ENCODE measurements at regions of chr7 and their contacts with region 1.

Region 1: DNA sequence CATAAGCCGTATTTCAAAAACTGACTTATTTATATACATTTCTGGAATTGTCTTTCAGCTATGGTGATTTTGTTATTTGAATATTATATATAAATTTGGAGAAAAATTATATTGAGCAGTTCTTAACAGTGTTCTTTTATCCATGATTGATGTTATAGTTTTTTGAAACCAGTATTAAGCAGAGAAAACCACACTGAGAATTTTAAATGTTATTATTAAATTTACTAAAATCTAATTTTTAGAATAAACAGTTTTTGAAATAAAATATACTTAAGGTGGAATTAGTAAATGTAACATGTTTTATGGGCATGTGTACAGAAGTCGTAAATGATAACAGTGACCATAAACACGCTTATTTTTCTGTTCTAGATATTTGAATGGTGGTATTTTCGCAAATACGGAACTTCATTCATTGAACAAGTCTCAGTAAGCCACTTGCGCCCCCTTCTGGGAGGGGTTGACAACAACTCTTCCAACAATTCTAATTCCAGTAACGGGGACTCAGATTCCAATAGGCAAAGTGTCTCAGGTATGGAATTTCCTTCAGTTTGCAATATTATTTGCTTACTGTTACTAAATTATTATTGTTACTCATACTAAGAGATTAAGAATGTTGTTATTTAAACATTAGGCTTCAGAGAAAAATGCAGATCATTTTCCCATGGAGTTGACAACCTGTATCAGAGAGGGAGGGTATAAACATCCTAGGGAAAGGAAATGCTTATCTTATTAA is 166.1 kb downstream of the ST7 start:
- DNase-seq: peak; percentile 37
- H3K4me3 ChIP-seq: no peak overlapping the region; a peak in 1 of 4 replicates
- H3K27ac ChIP-seq: no peak overlapping the region
- H3K4me1 ChIP-seq: peaks cover 11 to 15% of the 10 kb centered on the region in 2 experiments
- H3K27me3 ChIP-seq: no peaks in the 10 kb centered on the region
- CTCF ChIP-seq: peak; percentile 99
- EP300 ChIP-seq: no peak
- RAD21 ChIP-seq: peak; percentile 100

Region 2: DNA sequence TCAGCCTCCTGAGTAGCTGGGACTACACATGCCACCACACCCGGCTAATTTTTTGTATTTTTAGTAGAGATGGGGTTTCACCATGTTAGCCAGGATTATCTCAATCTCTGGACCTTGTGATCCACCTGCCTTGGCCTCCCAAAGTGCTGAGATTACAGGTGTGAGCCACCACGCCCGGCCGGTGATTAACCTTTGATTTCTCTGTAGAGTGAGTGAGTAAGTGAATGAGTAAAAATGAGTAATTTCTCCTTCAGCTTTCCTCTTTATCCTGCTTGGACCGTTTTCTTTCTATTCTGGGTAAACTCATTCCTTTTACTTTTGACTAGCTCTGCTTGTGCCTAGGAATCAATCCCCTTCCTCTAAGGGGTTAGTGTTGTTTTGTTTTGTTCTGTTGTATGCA is 129.3 kb before region 1 on chr7:
- CTCF ChIA-PET with region 1: interaction called, 668 read pairs
- POLR2A ChIA-PET with region 1: no interaction called
- DNase-seq: no peak
- H3K4me3 ChIP-seq: no peak overlapping the region
- H3K27ac ChIP-seq: no peak overlapping the region
- H3K4me1 ChIP-seq: peaks cover 0 to 8% of the 10 kb centered on the region in 2 experiments; a peak in 1 of 4 replicates
- H3K27me3 ChIP-seq: no peaks in the 10 kb centered on the region
- CTCF ChIP-seq: no peak
- EP300 ChIP-seq: no peak
- RAD21 ChIP-seq: no peak

Region 3: GRCh38 chr7:117014673-117015133 is 104.7 kb before region 1 on chr7:
- CTCF ChIA-PET with region 1: interaction called, 58 read pairs
- POLR2A ChIA-PET with region 1: interaction called, 3 read pairs
- DNase-seq: peak; percentile 66
- H3K4me3 ChIP-seq: peak overlapping the region; percentile 28 to 34; a peak in 3 of 4 replicates
- H3K27ac ChIP-seq: peak overlapping the region; percentile 30 to 79
- H3K4me1 ChIP-seq: peaks cover 20 to 23% of the 10 kb centered on the region in 2 experiments; a peak in 3 of 4 replicates
- H3K27me3 ChIP-seq: no peaks in the 10 kb centered on the region
- CTCF ChIP-seq: no peak
- EP300 ChIP-seq: peak in 1 of 2 experiments; percentile 27; a peak in 1 of 4 replicates
- RAD21 ChIP-seq: 0 out of 2 replicates have a peak, but pooled peaks have one; percentile 3

Region 4: GRCh38 chr7:117019786-117020590 is 99.4 kb before region 1 on chr7:
- CTCF ChIA-PET with region 1: interaction called, 10 read pairs
- POLR2A ChIA-PET with region 1: no interaction called
- DNase-seq: peak; percentile 78
- H3K4me3 ChIP-seq: peak overlapping the region; percentile 48 to 53
- H3K27ac ChIP-seq: peak overlapping the region; percentile 84 to 86
- H3K4me1 ChIP-seq: peaks cover 10 to 39% of the 10 kb centered on the region in 2 experiments; a peak in 3 of 4 replicates
- H3K27me3 ChIP-seq: no peaks in the 10 kb centered on the region
- CTCF ChIP-seq: no peak
- EP300 ChIP-seq: peak in 1 of 2 experiments; percentile 45; a peak in 1 of 4 replicates
- RAD21 ChIP-seq: 0 out of 2 replicates have a peak, but pooled peaks have one; percentile 18